ENCODE measurements at regions of chr18 and their contacts with region 1.

Region 1: GRCh38 chr18:58911766-58912165 is 47.1 kb downstream of the ZNF532 start:
- DNase-seq: no peak
- H3K4me3 ChIP-seq: peak overlapping the region; percentile 3 to 26
- H3K27ac ChIP-seq: peak overlapping the region; percentile 92 to 98
- H3K4me1 ChIP-seq: peaks cover 3 to 66% of the 10 kb centered on the region in 2 donors
- H3K27me3 ChIP-seq: no peaks in the 10 kb centered on the region
- CTCF ChIP-seq: no peak

Region 2: GRCh38 chr18:58819051-58819450 is 92.7 kb before region 1 on chr18:
- intact Hi-C with region 1: no loop called
- DNase-seq: no peak
- H3K4me3 ChIP-seq: no peak overlapping the region
- H3K27ac ChIP-seq: no peak overlapping the region
- H3K4me1 ChIP-seq: peaks cover 0 to 3% of the 10 kb centered on the region in 2 donors
- H3K27me3 ChIP-seq: no peaks in the 10 kb centered on the region
- CTCF ChIP-seq: no peak

Region 3: DNA sequence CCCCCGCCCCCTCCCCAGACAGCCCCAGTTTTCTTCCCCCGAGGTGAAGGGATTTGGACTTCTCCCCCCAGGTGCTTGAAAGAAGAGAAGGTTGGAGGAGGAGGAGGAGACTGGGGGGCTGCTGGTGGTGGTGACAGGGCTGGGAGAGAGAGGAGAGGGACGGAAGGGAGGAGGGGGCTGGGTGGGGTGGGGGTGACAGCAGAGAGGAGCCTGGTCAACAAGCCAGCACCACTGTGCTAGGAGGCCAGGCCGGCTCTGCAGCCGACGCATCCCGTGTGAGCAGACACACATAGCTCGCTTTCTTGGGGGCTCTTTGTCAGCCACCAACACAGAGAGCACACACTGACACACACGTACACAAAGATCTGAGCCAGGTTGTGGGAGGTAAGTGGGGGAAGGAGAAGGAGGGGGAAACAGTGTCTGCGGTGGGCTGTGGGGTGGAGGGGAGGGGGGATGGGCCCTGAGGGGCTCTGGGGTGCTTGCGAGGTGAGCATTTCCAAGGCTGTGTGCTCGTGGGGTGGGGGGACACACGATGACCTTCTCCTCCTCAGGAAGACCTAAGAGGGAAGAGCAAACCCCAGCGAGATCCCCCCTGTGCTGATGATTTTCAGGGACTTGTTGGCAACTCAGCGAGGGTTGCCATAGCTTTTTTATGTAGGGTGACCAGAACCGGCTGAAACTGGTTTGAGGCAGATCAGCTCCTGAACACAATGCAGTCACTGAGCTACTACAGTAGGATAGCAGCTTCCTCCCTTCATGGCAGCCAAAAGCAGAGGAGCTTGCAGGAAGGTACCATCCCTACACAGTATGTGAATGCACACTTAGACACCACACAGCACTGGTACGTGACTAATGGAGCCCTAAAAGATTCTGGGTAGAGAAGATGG is 47.4 kb before region 1 on chr18 and contains the start of gene ZNF532:
- intact Hi-C with region 1: loop called (anchors 5 kb)
- DNase-seq: no peak
- H3K4me3 ChIP-seq: peak within 1 kb of the TSS; percentile 52 to 69
- H3K27ac ChIP-seq: peak within 1 kb of the TSS; percentile 99 to 100
- H3K4me1 ChIP-seq: peaks cover 16 to 74% of the 10 kb centered on the region in 2 donors
- H3K27me3 ChIP-seq: no peaks in the 10 kb centered on the region
- CTCF ChIP-seq: no peak
- total RNA-seq, gene ZNF532: 161 TPM

Region 4: GRCh38 chr18:58882044-58882443 is 29.7 kb before region 1 on chr18:
- intact Hi-C with region 1: loop called (anchors 2 kb)
- DNase-seq: no peak
- H3K4me3 ChIP-seq: no peak overlapping the region
- H3K27ac ChIP-seq: peak overlapping the region; percentile 72 to 77
- H3K4me1 ChIP-seq: peaks cover 16 to 53% of the 10 kb centered on the region in 2 donors
- H3K27me3 ChIP-seq: no peaks in the 10 kb centered on the region
- CTCF ChIP-seq: no peak

Region 5: DNA sequence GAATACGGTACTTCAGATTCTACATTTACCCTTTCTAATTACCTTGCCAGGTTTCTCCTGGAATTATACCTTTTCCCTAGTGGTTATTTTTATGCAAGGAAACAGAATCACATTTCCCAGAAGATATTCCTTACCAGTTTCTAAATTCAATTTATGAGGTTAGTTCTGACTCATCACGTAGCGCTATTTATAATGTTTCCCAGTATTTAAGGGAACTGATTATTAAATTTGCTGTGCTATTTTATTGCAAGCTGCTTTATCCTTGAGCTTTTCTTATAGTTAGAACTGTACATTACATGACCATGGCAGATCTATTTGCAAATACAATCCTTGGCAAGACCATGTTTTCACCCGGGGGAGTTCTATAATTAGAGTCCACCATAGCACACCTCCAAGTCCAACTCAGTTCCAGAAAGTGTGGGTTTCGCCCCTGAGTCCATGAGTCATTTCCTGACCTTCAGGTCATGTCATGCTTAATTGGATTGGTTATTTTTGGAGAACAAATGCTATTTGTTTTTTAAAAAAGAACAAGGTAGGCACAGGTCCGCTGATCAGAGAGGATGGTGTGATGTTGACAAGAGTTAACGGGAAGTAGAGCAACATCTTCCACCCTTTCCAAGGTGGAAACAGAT is 79.5 kb after region 1 on chr18:
- intact Hi-C with region 1: loop called (anchors 2 kb)
- DNase-seq: peak in 1 of 2 donors; percentile 68
- H3K4me3 ChIP-seq: no peak overlapping the region
- H3K27ac ChIP-seq: peak overlapping the region; percentile 93 to 95
- H3K4me1 ChIP-seq: peaks cover 19 to 57% of the 10 kb centered on the region in 2 donors
- H3K27me3 ChIP-seq: no peaks in the 10 kb centered on the region
- CTCF ChIP-seq: peak in 1 of 3 experiments; percentile 28

Region 6: GRCh38 chr18:59041819-59042815 is 130.4 kb after region 1 on chr18:
- intact Hi-C with region 1: no loop called
- DNase-seq: peak in 1 of 2 donors; percentile 62
- H3K4me3 ChIP-seq: no peak overlapping the region
- H3K27ac ChIP-seq: peak overlapping the region; percentile 69 to 78
- H3K4me1 ChIP-seq: peaks cover 0 to 11% of the 10 kb centered on the region in 2 donors
- H3K27me3 ChIP-seq: no peaks in the 10 kb centered on the region
- CTCF ChIP-seq: no peak

Region 7: DNA sequence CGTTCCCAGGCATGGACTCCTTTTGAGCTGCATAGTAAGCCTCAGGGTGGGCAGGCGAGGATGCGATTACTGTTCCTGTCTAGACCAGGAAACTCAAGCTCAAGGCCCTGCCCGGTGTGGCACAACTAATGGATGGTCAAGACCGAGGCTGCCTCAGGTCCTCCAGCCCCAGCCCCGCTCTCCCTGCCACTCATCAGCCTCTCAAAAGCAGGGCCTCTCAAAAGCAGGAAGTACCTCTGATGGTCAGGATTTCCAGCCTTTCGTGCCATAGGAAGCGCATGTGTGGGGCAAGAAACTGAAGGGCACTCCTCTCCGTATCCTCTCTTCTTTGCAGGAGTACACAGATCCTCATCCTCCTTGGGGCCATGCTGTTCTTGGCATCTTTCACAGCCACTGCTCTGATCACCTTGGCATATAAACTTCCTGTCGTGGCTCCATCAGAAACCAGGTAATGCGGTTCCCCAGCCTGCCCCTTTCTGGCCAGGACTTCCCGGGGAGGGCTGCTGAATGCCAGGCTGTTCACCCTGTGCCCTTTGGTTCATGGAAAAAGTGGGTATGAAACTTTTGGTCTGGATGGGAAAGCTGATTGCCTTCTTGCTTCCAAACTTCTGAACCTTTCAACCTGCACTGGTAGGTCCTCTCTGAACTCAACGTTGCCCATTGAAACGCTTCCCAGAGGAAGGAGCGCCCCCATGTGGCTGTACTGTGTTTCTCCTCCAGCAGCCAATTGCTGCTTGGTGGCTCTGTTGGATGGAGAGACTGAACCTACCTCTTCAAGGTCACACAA is 145.1 kb after region 1 on chr18:
- intact Hi-C with region 1: loop called (anchors 2 kb)
- DNase-seq: peak in 1 of 2 donors; percentile 85
- H3K4me3 ChIP-seq: no peak overlapping the region
- H3K27ac ChIP-seq: peak overlapping the region; percentile 63 to 83
- H3K4me1 ChIP-seq: peaks cover 9 to 33% of the 10 kb centered on the region in 2 donors
- H3K27me3 ChIP-seq: no peaks in the 10 kb centered on the region
- CTCF ChIP-seq: peak; percentile 73 to 78 (median 78)

Region 8: DNA sequence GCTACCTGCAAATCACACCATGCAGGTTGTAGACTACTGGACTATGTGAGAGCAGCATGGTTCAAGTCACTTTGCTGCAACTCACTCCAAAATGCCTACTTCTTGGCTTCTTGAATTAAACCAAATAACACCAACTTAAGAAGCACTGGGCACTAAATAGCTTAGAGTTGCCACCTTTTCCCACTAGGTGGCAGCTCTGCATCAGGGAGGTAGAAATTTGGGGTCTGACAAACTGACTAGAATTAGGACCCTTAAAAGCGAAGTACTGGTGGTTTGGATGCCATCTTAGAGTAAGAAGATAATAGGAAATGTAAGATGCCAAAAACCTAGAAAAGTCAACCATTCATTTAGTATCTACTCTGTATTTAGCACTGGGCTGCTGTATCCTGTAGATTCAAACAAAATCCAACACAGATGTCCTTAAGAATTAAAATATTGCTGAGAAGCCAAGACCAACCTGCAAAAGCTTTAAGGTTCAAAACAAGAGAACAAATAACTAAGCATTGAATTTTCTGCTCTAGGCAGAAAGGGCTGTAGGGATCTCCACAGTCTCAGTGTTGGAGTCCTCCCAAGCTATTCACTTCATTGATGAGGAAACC is 719.9 kb after region 1 on chr18:
- intact Hi-C with region 1: no loop called
- DNase-seq: no peak
- H3K4me3 ChIP-seq: no peak overlapping the region
- H3K27ac ChIP-seq: no peak overlapping the region
- H3K4me1 ChIP-seq: no peaks in the 10 kb centered on the region
- H3K27me3 ChIP-seq: no peaks in the 10 kb centered on the region
- CTCF ChIP-seq: peak in 1 of 3 experiments; percentile 39